ENCODE measurements at regions of chr16 and their contacts with region 1.

Region 1: GRCh38 chr16:49921791-49922456 is 66.0 kb upstream of the ZNF423 start:
- DNase-seq: peak; percentile 48 to 77 (median 66)
- ATAC-seq: peak; percentile 69 to 95 (median 92)
- H3K4me3 ChIP-seq: no peak overlapping the region
- H3K27ac ChIP-seq: no peak overlapping the region
- H3K4me1 ChIP-seq: no peaks in the 10 kb centered on the region
- H3K27me3 ChIP-seq: peaks cover 0 to 4% (median 0%) of the 10 kb centered on the region in 4 donors
- CTCF ChIP-seq: peak; percentile 32 to 54 (median 50)

Region 2: GRCh38 chr16:49407873-49408550 is 513.9 kb before region 1 on chr16:
- intact Hi-C with region 1: loop called in 2 of 3 experiments (anchors 5 kb)
- DNase-seq: peak; percentile 80 to 94 (median 89)
- ATAC-seq: peak; percentile 99 to 100 (median 100)
- H3K4me3 ChIP-seq: no peak overlapping the region
- H3K27ac ChIP-seq: no peak overlapping the region
- H3K4me1 ChIP-seq: no peaks in the 10 kb centered on the region
- H3K27me3 ChIP-seq: no peaks in the 10 kb centered on the region
- CTCF ChIP-seq: peak; percentile 74 to 85 (median 80)

Region 3: GRCh38 chr16:49491771-49492761 is 429.9 kb before region 1 on chr16:
- intact Hi-C with region 1: loop called in 2 of 3 experiments (anchors 10 kb)
- DNase-seq: peak in 5 of 6 donors; percentile 15 to 82 (median 61)
- ATAC-seq: peak; percentile 78 to 92 (median 90)
- H3K4me3 ChIP-seq: peak overlapping the region in 2 of 4 donors; percentile 21 to 28
- H3K27ac ChIP-seq: no peak overlapping the region
- H3K4me1 ChIP-seq: peaks cover 0 to 3% (median 0%) of the 10 kb centered on the region in 3 donors
- H3K27me3 ChIP-seq: no peaks in the 10 kb centered on the region
- CTCF ChIP-seq: peak; percentile 80 to 92 (median 92)

Region 4: GRCh38 chr16:50136399-50136798 is 214.5 kb after region 1 on chr16:
- intact Hi-C with region 1: no loop called
- DNase-seq: no peak
- ATAC-seq: no peak
- H3K4me3 ChIP-seq: no peak overlapping the region
- H3K27ac ChIP-seq: no peak overlapping the region
- H3K4me1 ChIP-seq: no peaks in the 10 kb centered on the region
- H3K27me3 ChIP-seq: no peaks in the 10 kb centered on the region
- CTCF ChIP-seq: no peak